ENCODE measurements at regions of chr17 and their contacts with region 1.

Region 1: DNA sequence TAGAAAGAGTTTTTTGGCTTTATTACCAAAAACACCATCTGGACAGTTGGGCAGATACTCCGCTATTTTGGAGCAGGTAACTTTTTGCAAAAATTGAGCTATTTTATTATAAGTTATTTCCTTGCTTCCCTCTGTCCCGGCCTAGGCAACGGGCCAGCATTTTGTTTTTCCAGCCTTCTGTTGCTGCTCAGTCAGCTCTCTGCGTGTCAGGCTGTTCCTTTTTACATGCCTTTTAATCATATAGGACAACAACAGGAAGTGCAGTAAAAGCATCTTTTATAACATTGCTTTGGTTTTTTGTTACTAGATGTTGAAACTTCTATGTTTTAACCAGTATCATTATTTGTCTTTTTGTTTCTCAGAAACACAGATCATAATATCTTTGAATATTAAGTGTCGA is 30.4 kb downstream of the PPM1D start:
- DNase-seq: peak; percentile 7 to 22
- ATAC-seq: no peak
- H3K4me3 ChIP-seq: no peak overlapping the region
- H3K27ac ChIP-seq: peak overlapping the region; percentile 2 to 26 (median 10)
- H3K4me1 ChIP-seq: peaks cover 13 to 26% of the 10 kb centered on the region in 2 donors
- H3K27me3 ChIP-seq: no peaks in the 10 kb centered on the region
- CTCF ChIP-seq: no peak
- POLR2A ChIP-seq: no peak

Region 2: GRCh38 chr17:60473788-60474187 is 156.6 kb before region 1 on chr17:
- in situ Hi-C with region 1: loop called in 1 of 4 experiments (anchors 25 kb)
- intact Hi-C with region 1: loop called (anchors 10 kb)
- DNase-seq: no peak
- ATAC-seq: no peak
- H3K4me3 ChIP-seq: no peak overlapping the region
- H3K27ac ChIP-seq: no peak overlapping the region
- H3K4me1 ChIP-seq: peaks cover 20 to 29% of the 10 kb centered on the region in 2 donors
- H3K27me3 ChIP-seq: no peaks in the 10 kb centered on the region
- CTCF ChIP-seq: no peak
- POLR2A ChIP-seq: no peak

Region 3: GRCh38 chr17:60577147-60577915 is 53.0 kb before region 1 on chr17:
- in situ Hi-C with region 1: loop called in 3 of 4 experiments (anchors 5 to 10 kb)
- intact Hi-C with region 1: no loop called
- DNase-seq: peak in 1 of 2 donors; percentile 28
- ATAC-seq: peak; percentile 78 to 91
- H3K4me3 ChIP-seq: peak overlapping the region; percentile 25 to 43 (median 41)
- H3K27ac ChIP-seq: peak overlapping the region; percentile 56 to 72 (median 66)
- H3K4me1 ChIP-seq: peaks cover 4 to 6% of the 10 kb centered on the region in 2 donors
- H3K27me3 ChIP-seq: no peaks in the 10 kb centered on the region
- CTCF ChIP-seq: peak; percentile 19 to 58 (median 32)
- POLR2A ChIP-seq: no peak

Region 4: DNA sequence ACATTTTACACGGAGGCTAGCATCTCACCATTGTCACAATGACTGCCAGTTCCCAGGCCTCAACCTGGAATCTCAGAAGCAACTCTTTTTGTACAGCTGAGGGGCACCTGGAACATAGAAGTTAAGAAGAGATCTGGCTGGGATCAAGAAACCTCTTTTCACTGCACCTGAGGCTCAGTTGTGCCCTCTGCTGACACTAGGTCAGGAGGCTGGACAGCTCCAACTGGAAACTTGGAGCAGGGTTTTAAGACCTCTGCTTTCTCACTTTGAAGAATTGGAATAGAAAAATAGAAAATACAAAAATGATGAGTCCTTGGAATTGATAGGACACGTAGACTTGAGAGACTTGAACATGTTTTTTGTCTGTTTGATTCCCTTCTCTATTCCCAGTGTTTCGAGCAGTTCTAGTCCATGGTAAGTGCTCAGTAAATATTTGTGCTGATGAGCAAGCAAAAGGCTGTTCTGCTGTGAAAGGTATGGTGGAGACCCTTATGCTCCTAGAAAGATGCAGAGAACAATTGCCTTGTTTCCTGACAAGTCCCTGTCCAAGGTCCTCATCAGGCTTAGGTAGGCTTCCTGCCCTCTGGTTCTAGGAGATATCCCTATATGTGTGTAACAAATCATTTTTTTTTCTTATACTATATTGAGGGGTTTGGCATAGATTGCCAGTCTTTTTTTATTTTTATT is 43.9 kb before region 1 on chr17:
- in situ Hi-C with region 1: loop called in 1 of 4 experiments (anchors 10 kb)
- intact Hi-C with region 1: no loop called
- DNase-seq: no peak
- ATAC-seq: no peak
- H3K4me3 ChIP-seq: no peak overlapping the region
- H3K27ac ChIP-seq: no peak overlapping the region
- H3K4me1 ChIP-seq: no peaks in the 10 kb centered on the region
- H3K27me3 ChIP-seq: no peaks in the 10 kb centered on the region
- CTCF ChIP-seq: peak in 1 of 5 experiments; percentile 32
- POLR2A ChIP-seq: no peak

Region 5: DNA sequence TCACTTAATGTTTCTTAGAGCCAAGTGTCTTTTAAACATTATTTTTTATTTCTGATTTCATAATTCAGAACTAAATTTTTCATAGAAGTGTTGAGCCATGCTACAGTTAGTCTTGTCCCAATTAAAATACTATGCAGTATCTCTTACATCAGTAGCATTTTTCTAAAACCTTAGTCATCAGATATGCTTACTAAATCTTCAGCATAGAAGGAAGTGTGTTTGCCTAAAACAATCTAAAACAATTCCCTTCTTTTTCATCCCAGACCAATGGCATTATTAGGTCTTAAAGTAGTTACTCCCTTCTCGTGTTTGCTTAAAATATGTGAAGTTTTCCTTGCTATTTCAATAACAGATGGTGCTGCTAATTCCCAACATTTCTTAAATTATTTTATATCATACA is 33.7 kb after region 1 on chr17:
- in situ Hi-C with region 1: no loop called
- intact Hi-C with region 1: no loop called
- DNase-seq: no peak
- ATAC-seq: no peak
- H3K4me3 ChIP-seq: no peak overlapping the region
- H3K27ac ChIP-seq: no peak overlapping the region
- H3K4me1 ChIP-seq: peaks cover 0 to 7% of the 10 kb centered on the region in 2 donors
- H3K27me3 ChIP-seq: no peaks in the 10 kb centered on the region
- CTCF ChIP-seq: no peak
- POLR2A ChIP-seq: no peak